T-cell (primary cell): ENCODE measurements at regions of chr10 and their contacts with region 1.

Region 1: GRCh38 chr10:4849555-4850242 is 23.7 kb downstream of the AKR1E2 start:
- DNase-seq: peak; percentile 58 to 91 (median 80)
- ATAC-seq: peak; percentile 87 to 96 (median 89)
- H3K4me3 ChIP-seq: no peak overlapping the region
- H3K4me3 Mint-ChIP-seq: no peak overlapping the region
- H3K27ac ChIP-seq: no peak overlapping the region
- H3K27ac Mint-ChIP-seq: no peak overlapping the region
- H3K4me1 ChIP-seq: peaks cover 0 to 4% of the 10 kb centered on the region in 2 experiments
- H3K4me1 Mint-ChIP-seq: peaks cover 0 to 6% (median 5%) of the 10 kb centered on the region in 3 donors
- H3K27me3 ChIP-seq: no peaks in the 10 kb centered on the region
- H3K27me3 Mint-ChIP-seq: peaks cover 0 to 2% of the 10 kb centered on the region in 2 donors

Region 2: GRCh38 chr10:4704034-4704545 is 145.6 kb before region 1 on chr10:
- CTCF ChIA-PET with region 1: interaction called in 1 of 2 experiments, 11 read pairs
- POLR2A ChIA-PET with region 1: no interaction called
- DNase-seq: no peak
- ATAC-seq: no peak
- H3K4me3 ChIP-seq: no peak overlapping the region
- H3K4me3 Mint-ChIP-seq: no peak overlapping the region
- H3K27ac ChIP-seq: no peak overlapping the region
- H3K27ac Mint-ChIP-seq: no peak overlapping the region
- H3K4me1 ChIP-seq: no peaks in the 10 kb centered on the region
- H3K4me1 Mint-ChIP-seq: no peaks in the 10 kb centered on the region
- H3K27me3 ChIP-seq: peaks cover 0 to 6% of the 10 kb centered on the region in 2 experiments
- H3K27me3 Mint-ChIP-seq: peaks cover 21 to 31% of the 10 kb centered on the region in 2 donors

Region 3: GRCh38 chr10:4813023-4813422 is 36.7 kb before region 1 on chr10:
- CTCF ChIA-PET with region 1: interaction called, 4 to 16 read pairs
- POLR2A ChIA-PET with region 1: no interaction called
- DNase-seq: no peak
- ATAC-seq: no peak
- H3K4me3 ChIP-seq: no peak overlapping the region
- H3K4me3 Mint-ChIP-seq: no peak overlapping the region
- H3K27ac ChIP-seq: no peak overlapping the region
- H3K27ac Mint-ChIP-seq: no peak overlapping the region
- H3K4me1 ChIP-seq: peaks cover 0 to 4% of the 10 kb centered on the region in 2 experiments
- H3K4me1 Mint-ChIP-seq: no peaks in the 10 kb centered on the region
- H3K27me3 ChIP-seq: peaks cover 0 to 7% of the 10 kb centered on the region in 2 experiments
- H3K27me3 Mint-ChIP-seq: peaks cover 0 to 7% of the 10 kb centered on the region in 2 donors

Region 4: GRCh38 chr10:4835494-4835918 is 14.2 kb before region 1 on chr10:
- CTCF ChIA-PET with region 1: interaction called, 15 to 18 read pairs
- POLR2A ChIA-PET with region 1: no interaction called
- DNase-seq: peak in 15 of 35 experiments; percentile 7 to 45 (median 17)
- ATAC-seq: peak; percentile 77 to 90 (median 88)
- H3K4me3 ChIP-seq: no peak overlapping the region
- H3K4me3 Mint-ChIP-seq: peak overlapping the region in 1 of 3 donors; percentile 35
- H3K27ac ChIP-seq: peak overlapping the region; percentile 62
- H3K27ac Mint-ChIP-seq: peak overlapping the region; percentile 92 to 95
- H3K4me1 ChIP-seq: peaks cover 12 to 29% of the 10 kb centered on the region in 2 experiments
- H3K4me1 Mint-ChIP-seq: peaks cover 27 to 48% (median 46%) of the 10 kb centered on the region in 3 donors
- H3K27me3 ChIP-seq: peaks cover 0 to 3% of the 10 kb centered on the region in 2 experiments
- H3K27me3 Mint-ChIP-seq: peaks cover 0 to 10% of the 10 kb centered on the region in 2 donors

Region 5: GRCh38 chr10:4883079-4883739 is 33.5 kb after region 1 on chr10:
- CTCF ChIA-PET with region 1: no interaction called
- POLR2A ChIA-PET with region 1: no interaction called
- DNase-seq: no peak
- ATAC-seq: no peak
- H3K4me3 ChIP-seq: no peak overlapping the region
- H3K4me3 Mint-ChIP-seq: no peak overlapping the region
- H3K27ac ChIP-seq: no peak overlapping the region
- H3K27ac Mint-ChIP-seq: no peak overlapping the region
- H3K4me1 ChIP-seq: no peaks in the 10 kb centered on the region
- H3K4me1 Mint-ChIP-seq: peaks cover 0 to 2% (median 0%) of the 10 kb centered on the region in 3 donors
- H3K27me3 ChIP-seq: no peaks in the 10 kb centered on the region
- H3K27me3 Mint-ChIP-seq: peaks cover 0 to 17% of the 10 kb centered on the region in 2 donors

Region 6: DNA sequence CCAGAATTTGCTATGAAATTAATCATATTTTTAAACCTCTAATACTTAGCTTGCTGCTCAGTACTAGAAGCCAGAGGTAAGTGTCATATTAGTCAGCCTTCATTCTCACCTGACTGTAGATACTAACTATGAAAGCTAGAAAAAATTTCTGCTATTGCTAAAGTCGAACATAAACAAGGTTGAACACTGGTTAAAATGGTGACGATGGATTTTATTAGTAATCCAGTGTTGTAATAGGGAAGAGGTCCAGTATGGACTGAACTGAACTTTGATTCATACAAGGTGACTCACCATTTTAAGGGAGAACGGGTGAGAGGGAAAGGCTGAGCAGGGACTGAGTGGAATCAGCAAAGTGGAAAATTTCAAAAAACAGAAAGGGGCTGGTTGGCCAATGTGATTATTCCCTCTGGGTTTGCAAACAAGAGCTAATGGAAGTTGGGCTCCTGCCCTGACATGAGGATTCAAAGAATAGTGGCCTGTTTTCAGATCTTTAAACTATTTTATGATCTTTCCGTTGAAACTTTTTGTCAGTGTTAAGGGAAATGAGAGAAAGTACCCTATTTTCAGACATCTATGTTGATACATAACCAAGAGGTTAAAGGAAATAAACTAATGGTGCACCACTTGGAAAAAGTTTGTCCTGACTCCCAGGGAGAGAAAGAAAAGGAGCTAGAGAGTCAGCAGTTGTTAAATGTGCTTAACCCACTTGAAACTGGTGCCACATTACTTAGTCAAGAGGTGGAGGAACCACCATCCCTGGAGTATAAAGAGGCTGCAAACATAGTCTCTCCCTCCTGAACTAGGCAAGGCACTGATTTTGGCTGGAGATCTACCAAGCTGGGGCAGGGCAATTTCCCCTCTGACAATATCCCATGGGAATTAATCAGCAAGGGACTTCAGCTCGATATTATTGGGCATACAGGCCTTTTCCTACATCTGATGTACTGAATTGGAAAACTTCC is 98.2 kb after region 1 on chr10:
- CTCF ChIA-PET with region 1: no interaction called
- POLR2A ChIA-PET with region 1: no interaction called
- DNase-seq: no peak
- ATAC-seq: no peak
- H3K4me3 ChIP-seq: no peak overlapping the region
- H3K4me3 Mint-ChIP-seq: no peak overlapping the region
- H3K27ac ChIP-seq: no peak overlapping the region
- H3K27ac Mint-ChIP-seq: no peak overlapping the region
- H3K4me1 ChIP-seq: no peaks in the 10 kb centered on the region
- H3K4me1 Mint-ChIP-seq: no peaks in the 10 kb centered on the region
- H3K27me3 ChIP-seq: no peaks in the 10 kb centered on the region
- H3K27me3 Mint-ChIP-seq: no peaks in the 10 kb centered on the region

Region 7: DNA sequence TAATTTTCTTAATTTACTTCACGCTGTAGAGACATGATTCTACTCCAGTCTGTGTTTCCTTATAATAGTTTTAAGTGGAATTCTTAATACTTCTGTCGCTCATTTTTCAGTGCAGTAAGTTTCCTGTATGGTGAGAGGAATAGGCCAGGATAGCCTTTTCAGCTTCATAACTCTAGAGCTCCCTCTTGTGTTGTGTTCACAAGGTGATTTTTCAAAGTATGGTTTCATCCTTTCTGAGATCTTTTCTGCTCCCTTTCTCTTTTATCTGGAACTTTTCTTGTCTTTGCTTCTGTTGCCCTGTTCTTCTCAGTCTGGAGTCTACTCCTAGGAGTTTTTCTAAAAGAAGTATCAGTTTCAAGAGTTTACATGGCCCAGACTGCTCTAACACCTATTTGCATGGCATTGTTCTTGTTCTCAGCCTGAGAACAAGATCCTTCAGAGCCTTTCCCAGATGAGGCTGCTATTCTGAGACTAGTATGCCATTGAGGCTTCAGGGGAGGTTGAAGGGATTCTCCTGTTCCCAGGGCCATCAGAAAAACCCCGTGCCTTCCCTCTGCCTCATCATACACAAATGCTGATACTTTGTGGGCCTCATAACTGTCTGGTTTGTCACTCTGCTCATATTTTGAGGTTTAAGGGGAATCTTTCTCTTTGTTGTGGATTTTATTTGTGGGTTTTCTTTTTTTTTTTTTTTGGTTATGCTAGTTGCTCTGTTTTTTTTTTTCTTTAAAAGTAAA is 584.5 kb after region 1 on chr10:
- CTCF ChIA-PET with region 1: interaction called, 9 to 32 read pairs
- POLR2A ChIA-PET with region 1: no interaction called
- DNase-seq: peak in 3 of 35 experiments; percentile 1 to 62 (median 11)
- ATAC-seq: peak; percentile 61 to 77 (median 68)
- H3K4me3 ChIP-seq: no peak overlapping the region
- H3K4me3 Mint-ChIP-seq: peak overlapping the region in 1 of 3 donors; percentile 40
- H3K27ac ChIP-seq: no peak overlapping the region
- H3K27ac Mint-ChIP-seq: no peak overlapping the region
- H3K4me1 ChIP-seq: peaks cover 3 to 7% of the 10 kb centered on the region in 2 experiments
- H3K4me1 Mint-ChIP-seq: peaks cover 8 to 12% (median 9%) of the 10 kb centered on the region in 3 donors
- H3K27me3 ChIP-seq: no peaks in the 10 kb centered on the region
- H3K27me3 Mint-ChIP-seq: no peaks in the 10 kb centered on the region